ENCODE measurements at regions of chr2 and their contacts with region 1.

Region 1: GRCh38 chr2:224585205-224586088 is at the start of gene CUL3:
- DNase-seq: peak; percentile 100
- H3K4me3 ChIP-seq: peak within 1 kb of the TSS; percentile 70 to 90 (median 80)
- H3K27ac ChIP-seq: peak within 1 kb of the TSS; percentile 91 to 98 (median 96)
- H3K4me1 ChIP-seq: peaks cover 29 to 55% (median 49%) of the 10 kb centered on the region in 6 donors
- H3K27me3 ChIP-seq: no peaks in the 10 kb centered on the region
- CTCF ChIP-seq: peak in 4 of 11 experiments; percentile 13 to 58 (median 40)
- POLR2A ChIP-seq: peak; percentile 26 to 87 (median 67)
- total RNA-seq, gene CUL3: 75.8 to 99.7 (median 83.7) TPM

Region 2: DNA sequence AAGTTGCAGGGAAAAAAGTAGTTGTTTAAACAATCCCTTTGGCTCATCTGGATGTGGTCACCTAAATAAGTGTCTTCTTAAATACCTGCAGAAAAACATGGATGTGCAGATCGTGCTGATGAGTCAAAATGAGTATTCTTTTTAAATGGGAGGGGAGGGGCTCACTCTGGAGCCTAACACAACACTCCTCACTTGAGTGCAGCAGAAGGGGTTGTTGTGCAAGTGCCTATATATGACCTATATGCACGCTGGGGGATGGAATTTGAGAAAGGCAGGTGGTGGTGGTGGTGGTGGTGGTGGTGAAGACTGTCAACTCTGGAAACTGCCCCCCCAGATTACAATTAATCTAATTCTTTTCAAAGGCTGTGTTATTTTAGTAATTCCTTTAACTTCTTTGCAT is 105.6 kb before region 1 on chr2:
- intact Hi-C with region 1: no loop called
- DNase-seq: no peak
- H3K4me3 ChIP-seq: no peak overlapping the region
- H3K27ac ChIP-seq: no peak overlapping the region
- H3K4me1 ChIP-seq: no peaks in the 10 kb centered on the region
- H3K27me3 ChIP-seq: no peaks in the 10 kb centered on the region
- CTCF ChIP-seq: no peak
- POLR2A ChIP-seq: no peak

Region 3: GRCh38 chr2:224520064-224520463 is 65.4 kb before region 1 on chr2:
- intact Hi-C with region 1: loop called (anchors 10 kb)
- DNase-seq: no peak
- H3K4me3 ChIP-seq: no peak overlapping the region
- H3K27ac ChIP-seq: peak overlapping the region; percentile 4 to 88 (median 82)
- H3K4me1 ChIP-seq: peaks cover 57 to 88% (median 80%) of the 10 kb centered on the region in 6 donors
- H3K27me3 ChIP-seq: no peaks in the 10 kb centered on the region
- CTCF ChIP-seq: no peak
- POLR2A ChIP-seq: no peak

Region 4: GRCh38 chr2:224650815-224651439 is 65.5 kb after region 1 on chr2:
- intact Hi-C with region 1: no loop called
- DNase-seq: no peak
- H3K4me3 ChIP-seq: no peak overlapping the region
- H3K27ac ChIP-seq: no peak overlapping the region
- H3K4me1 ChIP-seq: peaks cover 0 to 11% (median 0%) of the 10 kb centered on the region in 6 donors
- H3K27me3 ChIP-seq: no peaks in the 10 kb centered on the region
- CTCF ChIP-seq: peak; percentile 35 to 81 (median 76)
- POLR2A ChIP-seq: no peak